ENCODE measurements at regions of chr1 and their contacts with region 1.

Region 1: DNA sequence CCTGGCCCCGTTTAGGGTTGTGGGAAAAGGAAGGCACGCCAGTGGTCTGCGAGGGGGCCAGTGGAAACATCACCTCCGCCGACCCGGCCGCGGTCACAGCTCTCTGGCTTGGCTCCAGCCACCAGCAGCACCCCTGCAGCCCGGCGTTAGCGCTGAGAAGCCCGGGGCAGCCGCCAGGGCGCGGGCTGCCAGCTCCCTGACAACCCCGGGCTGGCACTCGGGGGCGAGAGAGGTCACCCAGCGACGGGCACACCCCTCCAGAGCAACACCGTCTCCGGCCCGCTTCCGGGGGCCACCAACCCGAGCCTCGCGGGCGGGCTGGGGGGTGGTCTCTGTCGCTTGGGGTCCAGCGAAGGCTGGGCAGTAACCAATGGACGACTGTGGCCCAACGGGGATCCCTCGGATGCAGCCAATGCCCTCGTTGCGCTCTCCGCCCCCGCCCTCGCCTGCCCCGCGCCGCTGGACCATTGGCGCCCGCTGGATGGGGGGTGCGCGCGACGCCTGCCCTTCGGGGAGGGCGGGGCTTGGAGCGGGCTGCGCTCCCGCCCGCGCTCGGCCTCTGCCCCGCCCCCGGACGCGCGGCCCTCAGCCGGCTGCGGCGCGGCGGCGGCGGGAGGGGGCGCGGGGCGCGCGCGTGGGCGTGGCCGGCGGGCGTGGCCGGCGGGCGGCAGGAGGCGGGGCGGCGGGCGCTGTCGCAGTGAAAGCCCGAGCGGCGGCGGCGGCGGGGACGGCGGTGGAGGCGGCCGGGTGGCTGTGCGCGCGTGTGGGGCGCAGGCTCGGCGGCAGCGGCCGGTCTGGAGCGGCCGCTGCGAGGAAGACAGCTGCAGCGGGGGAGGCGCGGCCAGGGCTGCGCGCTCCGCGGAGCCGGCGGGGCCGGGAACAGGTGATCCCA is at the start of gene MAN1C1:
- DNase-seq: peak; percentile 88
- ATAC-seq: peak; percentile 93
- H3K4me3 Mint-ChIP-seq: peak within 1 kb of the TSS; percentile 69
- H3K27ac Mint-ChIP-seq: no peak within 1 kb of the TSS
- H3K4me1 Mint-ChIP-seq: peaks cover 25% of the 10 kb centered on the region
- H3K27me3 Mint-ChIP-seq: peaks cover 34% of the 10 kb centered on the region
- CTCF ChIP-seq: no peak
- total RNA-seq, gene MAN1C1: 0.20 and 0.34 TPM in 2 replicates

Region 2: DNA sequence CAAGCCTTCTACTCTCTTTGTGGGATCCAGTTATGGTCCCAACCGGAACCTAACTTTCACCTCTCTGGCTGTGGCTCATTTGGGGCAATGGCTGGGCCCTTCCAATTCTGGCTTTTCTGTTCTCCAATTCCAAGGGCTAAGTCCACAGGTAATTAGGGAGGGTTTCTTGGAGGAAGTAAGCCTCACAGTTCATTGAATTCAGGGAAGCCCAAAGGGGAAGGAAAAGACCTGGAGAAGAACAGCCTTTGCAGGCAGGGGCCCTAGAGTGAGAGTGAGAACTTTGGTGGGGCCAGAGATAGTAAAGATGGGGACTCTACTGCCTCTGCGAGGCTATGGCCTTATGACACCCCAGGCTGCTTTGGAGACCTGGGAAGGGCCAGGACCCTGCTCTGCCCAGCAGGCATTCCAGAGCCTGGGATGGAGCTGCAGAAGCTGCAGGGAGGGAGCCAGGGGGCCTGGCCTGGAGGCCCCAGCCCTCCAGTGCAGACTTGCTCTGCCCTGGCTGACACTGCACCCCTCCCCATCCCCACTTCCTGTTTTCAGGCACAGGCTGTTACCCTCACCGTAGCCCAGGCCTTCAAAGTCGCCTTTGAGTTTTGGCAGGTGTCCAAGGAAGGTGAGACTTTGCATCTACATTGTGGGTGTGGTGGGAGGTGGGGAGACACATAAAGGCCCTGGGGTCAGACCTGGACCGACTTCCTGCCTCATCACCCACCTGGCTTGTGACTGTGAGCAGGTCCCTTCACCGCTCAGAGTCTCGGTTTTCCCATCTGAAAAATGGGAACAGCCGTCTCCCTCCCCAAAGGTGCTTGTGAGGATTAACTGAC is 54.0 kb before region 1 on chr1:
- CTCF ChIA-PET with region 1: no interaction called
- POLR2A ChIA-PET with region 1: no interaction called
- intact Hi-C with region 1: loop called (anchors 5 kb)
- DNase-seq: peak; percentile 43
- ATAC-seq: peak; percentile 94
- H3K4me3 Mint-ChIP-seq: no peak overlapping the region
- H3K27ac Mint-ChIP-seq: peak overlapping the region; percentile 85
- H3K4me1 Mint-ChIP-seq: peaks cover 57% of the 10 kb centered on the region
- H3K27me3 Mint-ChIP-seq: no peaks in the 10 kb centered on the region
- CTCF ChIP-seq: no peak

Region 3: DNA sequence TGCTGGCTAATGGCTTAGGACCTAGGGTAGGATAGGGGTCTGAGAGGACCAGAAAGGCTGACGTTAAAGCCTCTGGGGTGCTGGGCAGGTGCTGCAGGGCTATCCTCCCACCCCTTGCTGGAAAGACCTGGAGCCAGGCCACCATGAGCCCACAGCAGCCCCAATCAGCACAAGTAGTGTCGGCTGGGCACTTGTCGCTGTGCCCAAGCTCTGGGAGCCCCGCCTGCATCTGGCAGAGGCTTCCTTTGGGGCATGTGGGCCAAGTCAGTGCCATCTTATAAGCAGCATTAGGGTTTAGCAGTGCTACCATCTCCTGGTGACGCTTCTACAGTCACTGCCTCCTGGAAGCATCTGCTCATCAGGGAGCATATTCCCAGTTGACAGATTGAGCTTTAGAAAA is 31.5 kb after region 1 on chr1:
- CTCF ChIA-PET with region 1: no interaction called
- POLR2A ChIA-PET with region 1: no interaction called
- intact Hi-C with region 1: no loop called
- DNase-seq: no peak
- ATAC-seq: no peak
- H3K4me3 Mint-ChIP-seq: no peak overlapping the region
- H3K27ac Mint-ChIP-seq: no peak overlapping the region
- H3K4me1 Mint-ChIP-seq: peaks cover 2% of the 10 kb centered on the region
- H3K27me3 Mint-ChIP-seq: peaks cover 34% of the 10 kb centered on the region
- CTCF ChIP-seq: no peak

Region 4: DNA sequence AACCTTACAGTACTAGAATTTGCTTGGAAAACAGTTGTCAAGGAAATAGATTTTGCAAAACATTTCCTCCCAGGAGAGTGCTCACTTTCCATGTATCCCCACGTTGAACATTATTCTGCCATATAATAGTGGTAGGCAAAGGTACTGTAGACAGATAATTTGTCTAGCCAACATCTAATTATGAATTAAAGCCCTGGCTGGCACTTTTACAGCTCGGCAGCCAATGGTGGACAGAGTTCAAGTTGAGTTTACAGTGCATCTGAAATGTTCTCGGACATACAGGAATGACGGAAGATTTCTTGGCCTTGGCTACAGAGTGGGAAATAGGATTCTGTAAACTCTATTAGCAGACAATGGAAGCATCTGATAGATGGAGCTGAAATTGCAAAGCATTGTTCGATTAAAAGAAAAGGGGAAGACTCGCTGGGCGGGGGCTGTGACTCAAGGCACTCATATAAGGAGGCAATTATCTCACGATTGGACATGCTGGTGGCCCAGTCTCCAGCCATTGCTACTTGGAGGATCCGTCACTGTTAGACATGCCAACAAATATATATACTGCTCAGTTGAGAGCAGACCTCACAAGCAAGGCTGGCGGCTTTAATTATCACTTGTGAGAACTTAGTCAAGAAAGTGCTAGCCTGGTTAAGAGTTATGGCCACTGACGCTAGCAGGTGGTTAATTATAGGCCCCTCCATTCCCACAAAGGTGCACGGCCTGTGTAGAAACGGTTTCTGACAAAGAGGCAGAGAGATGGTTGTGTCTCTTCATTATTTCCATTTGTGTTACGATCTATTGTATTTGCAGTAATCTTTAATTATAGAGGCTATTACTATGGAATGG is 48.2 kb after region 1 on chr1:
- CTCF ChIA-PET with region 1: no interaction called
- POLR2A ChIA-PET with region 1: no interaction called
- intact Hi-C with region 1: no loop called
- DNase-seq: no peak
- ATAC-seq: no peak
- H3K4me3 Mint-ChIP-seq: no peak overlapping the region
- H3K27ac Mint-ChIP-seq: no peak overlapping the region
- H3K4me1 Mint-ChIP-seq: no peaks in the 10 kb centered on the region
- H3K27me3 Mint-ChIP-seq: peaks cover 11% of the 10 kb centered on the region
- CTCF ChIP-seq: no peak

Region 5: DNA sequence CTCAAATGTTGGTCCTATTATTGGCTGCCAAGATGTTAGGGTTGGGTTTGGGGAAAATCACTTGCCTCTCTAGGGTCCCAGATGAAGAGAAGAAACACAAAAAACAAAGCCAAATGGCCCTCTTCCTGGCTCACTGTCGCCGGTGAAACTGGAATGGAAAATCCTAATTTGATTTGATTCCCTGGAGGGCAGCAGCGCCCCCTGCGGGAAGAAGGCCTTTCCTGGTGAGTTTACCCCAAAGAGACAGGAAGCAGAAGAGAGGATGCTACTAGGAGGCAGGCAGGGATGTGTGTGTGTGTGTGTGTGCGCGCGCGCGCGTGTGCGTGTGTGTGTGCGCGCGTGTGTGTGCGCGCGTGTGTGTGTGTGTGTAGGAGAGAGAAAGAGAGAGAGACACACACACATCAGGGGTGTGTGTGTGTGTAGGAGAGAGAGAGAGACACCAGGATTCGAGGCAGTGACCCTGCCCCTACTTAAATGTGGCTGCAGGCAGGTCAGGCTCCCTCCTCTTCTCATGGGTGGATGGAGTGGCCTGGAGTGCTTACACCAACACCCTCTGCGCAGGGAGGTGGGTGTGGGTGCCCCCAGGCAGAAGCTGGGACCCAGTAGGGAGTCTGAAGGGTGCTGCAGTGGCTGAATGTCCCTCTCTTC is 180.6 kb after region 1 on chr1:
- CTCF ChIA-PET with region 1: no interaction called
- POLR2A ChIA-PET with region 1: no interaction called
- intact Hi-C with region 1: loop called (anchors 5 kb)
- DNase-seq: peak; percentile 36
- ATAC-seq: peak; percentile 32
- H3K4me3 Mint-ChIP-seq: peak overlapping the region; percentile 4
- H3K27ac Mint-ChIP-seq: no peak overlapping the region
- H3K4me1 Mint-ChIP-seq: peaks cover 16% of the 10 kb centered on the region
- H3K27me3 Mint-ChIP-seq: no peaks in the 10 kb centered on the region
- CTCF ChIP-seq: no peak